PC-3 (cell line): ENCODE measurements at regions of chr10 and their contacts with region 1.

Region 1: GRCh38 chr10:43781480-43782361 is 133.0 kb upstream of the ZNF32 start:
- DNase-seq: peak; percentile 30
- ATAC-seq: peak; percentile 42; the same call in 1 of the 2 replicates
- H3K4me3 ChIP-seq: no peak overlapping the region
- H3K27ac ChIP-seq: no peak overlapping the region
- H3K4me1 ChIP-seq: no peaks in the 10 kb centered on the region
- H3K27me3 ChIP-seq: no peaks in the 10 kb centered on the region
- CTCF ChIP-seq: no peak

Region 2: DNA sequence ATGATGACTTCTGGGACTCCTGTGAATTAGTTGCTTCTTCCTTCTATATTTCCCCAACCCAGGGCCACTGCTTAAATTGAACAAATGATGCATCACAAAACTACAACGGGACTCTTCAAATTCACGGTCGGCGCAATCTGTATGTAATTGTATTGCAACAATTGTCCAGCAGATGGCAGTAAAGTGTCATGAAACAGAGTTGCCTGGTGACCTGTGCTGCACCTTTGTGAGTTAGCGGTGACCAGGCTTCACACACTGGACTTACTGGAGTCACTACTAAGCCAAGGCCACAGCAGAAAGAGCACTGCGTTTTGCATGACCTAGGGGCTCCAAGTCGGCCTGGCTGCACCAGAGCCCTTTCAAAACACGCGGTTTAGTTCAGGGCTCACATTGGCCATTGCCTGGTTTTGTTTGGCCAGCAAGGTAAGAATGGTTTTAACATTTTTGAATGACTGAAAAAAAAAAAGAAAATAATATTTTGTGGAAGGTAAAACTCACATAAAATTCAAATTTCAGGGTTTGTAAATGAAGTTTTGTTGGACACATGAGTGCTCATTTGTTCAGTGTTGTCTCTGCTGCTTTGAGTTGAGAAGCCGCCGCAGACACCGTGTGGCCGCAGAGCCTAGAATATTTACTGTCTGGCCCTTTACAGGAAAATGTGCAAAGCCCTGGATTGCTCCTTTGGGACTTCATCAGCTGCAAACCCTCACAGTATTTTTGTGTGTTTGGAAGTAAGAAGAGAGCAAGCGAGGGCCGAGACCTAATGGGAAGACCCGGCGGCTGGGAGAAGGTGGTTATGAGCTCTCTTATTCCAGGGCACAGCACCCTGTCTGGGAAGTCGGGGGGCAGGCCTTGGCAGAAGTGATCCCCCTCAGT is 109.8 kb before region 1 on chr10:
- CTCF ChIA-PET with region 1: no interaction called
- POLR2A ChIA-PET with region 1: no interaction called
- intact Hi-C with region 1: loop called (anchors 5 kb)
- DNase-seq: peak; percentile 88
- ATAC-seq: peak; percentile 90
- H3K4me3 ChIP-seq: no peak overlapping the region
- H3K27ac ChIP-seq: no peak overlapping the region
- H3K4me1 ChIP-seq: no peaks in the 10 kb centered on the region
- H3K27me3 ChIP-seq: peaks cover 26% of the 10 kb centered on the region
- CTCF ChIP-seq: peak; percentile 96

Region 3: DNA sequence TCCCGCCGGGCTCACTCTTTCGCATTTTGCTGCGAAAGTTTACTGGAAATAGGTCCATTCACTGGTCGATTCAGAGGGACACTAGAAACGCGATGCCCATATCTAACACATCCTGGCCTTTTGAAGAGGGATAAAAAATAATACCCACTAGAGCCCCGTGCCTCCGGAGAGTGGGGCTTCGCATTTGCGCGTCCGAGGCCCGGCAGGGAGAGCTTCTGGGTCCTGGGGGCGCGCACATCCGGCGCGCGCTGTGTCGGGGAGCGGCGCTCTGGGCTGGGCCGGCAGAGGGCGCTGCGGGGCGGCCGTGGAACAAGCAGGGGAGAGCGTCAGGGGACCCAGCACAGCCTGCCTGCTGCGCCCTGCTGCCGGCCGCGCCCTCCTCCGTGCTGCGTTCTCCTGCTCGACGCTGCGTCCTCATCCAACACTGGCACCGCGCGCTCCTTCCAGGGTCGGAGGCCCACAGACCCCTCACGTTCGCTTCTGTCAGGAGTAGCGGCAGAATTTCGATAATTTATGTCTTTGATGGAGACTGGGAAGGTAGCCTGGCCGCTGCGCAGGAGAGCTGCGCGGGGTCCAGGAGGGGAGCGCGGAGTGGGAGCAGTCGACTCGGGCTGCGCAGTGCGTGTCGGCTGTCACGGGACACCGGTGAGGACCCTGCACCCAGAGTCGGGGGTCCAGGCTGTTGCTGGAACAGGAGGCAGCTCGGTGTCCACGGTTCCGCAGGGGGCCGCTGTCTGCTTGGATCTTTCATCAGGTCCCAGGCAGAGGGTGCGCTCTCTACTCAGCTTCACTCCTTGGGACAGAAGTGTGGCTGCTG is 91.6 kb before region 1 on chr10:
- CTCF ChIA-PET with region 1: no interaction called
- POLR2A ChIA-PET with region 1: no interaction called
- intact Hi-C with region 1: loop called (anchors 5 kb)
- DNase-seq: peak; percentile 66
- ATAC-seq: peak; percentile 86
- H3K4me3 ChIP-seq: peak overlapping the region; percentile 61
- H3K27ac ChIP-seq: no peak overlapping the region
- H3K4me1 ChIP-seq: 0 out of 2 replicates have a peak, but pooled peaks cover 8% of the 10 kb centered on the region
- H3K27me3 ChIP-seq: peaks cover 23% of the 10 kb centered on the region
- CTCF ChIP-seq: peak; percentile 79